ENCODE measurements at regions of chr19 and their contacts with region 1.

Region 1: DNA sequence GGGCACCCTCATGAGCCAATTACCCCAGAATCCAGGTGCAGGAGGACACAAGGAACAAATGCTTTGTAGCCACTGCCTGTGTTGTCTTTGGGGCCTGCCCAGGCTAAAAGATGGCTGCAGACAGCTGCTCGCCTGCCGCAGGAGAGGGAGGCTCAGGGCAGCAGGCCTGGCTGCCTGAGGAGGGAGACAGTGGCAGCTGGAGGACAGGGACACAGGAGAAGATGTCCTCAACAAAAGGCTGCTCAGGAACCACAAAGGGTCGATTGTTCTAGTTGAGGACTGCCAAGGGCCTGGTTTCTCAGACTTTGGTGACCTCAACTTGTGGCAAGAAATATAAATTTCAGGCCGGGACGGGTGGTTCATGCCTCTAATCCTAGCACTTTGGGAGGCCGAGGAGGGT is 7.6 kb downstream of the SIRT2 start:
- DNase-seq: no peak
- ATAC-seq: no peak
- H3K4me3 Mint-ChIP-seq: no peak overlapping the region
- H3K27ac Mint-ChIP-seq: no peak overlapping the region
- H3K4me1 Mint-ChIP-seq: no peaks in the 10 kb centered on the region
- H3K27me3 Mint-ChIP-seq: peaks cover 2% of the 10 kb centered on the region; the same call in 1 of the 2 replicates
- CTCF ChIP-seq: no peak

Region 2: DNA sequence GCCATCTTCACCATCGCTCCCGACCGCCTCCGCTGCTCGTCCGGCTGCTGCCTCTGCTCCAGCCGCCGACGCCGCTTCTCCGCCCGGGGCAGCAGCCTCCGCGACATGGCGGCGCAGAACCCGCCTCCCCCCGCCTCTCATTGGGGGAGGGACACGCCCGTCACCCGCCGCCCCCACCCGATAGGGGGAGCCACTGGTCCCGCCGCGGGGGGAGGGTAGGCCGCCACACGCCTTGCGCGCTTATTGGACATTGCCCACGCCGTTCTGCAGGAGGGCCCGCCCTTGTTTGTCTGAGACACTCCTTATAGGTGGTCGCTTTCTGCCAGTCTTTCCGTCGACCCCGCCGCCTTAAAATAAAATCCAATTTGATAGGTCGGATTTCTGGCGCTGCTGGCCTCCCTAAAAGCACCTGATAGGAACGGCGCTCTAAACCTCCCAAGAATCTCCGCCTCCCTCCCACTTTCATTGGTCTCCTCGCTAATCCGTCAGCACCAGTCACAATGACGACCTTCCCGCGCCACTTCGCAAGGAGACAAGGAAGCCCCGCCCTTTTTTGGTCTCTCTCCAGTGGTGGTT is 41.8 kb before region 1 on chr19 and contains the start of gene HNRNPL:
- CTCF ChIA-PET with region 1: interaction called, 18 read pairs
- POLR2A ChIA-PET with region 1: no interaction called
- DNase-seq: peak; percentile 99
- ATAC-seq: peak; percentile 73
- H3K4me3 Mint-ChIP-seq: peak within 1 kb of the TSS; percentile 92
- H3K27ac Mint-ChIP-seq: peak within 1 kb of the TSS; percentile 99
- H3K4me1 Mint-ChIP-seq: peaks cover 39% of the 10 kb centered on the region
- H3K27me3 Mint-ChIP-seq: peaks cover under 1% of the 10 kb centered on the region; the same call in 1 of the 2 replicates
- CTCF ChIP-seq: peak; percentile 34; the same call in 1 of the 2 replicates
- total RNA-seq, gene HNRNPL: 680 to 779 TPM (median 683 TPM) in 3 replicates

Region 3: GRCh38 chr19:38869856-38870607 is 21.7 kb before region 1 on chr19:
- CTCF ChIA-PET with region 1: interaction called, 43 read pairs
- POLR2A ChIA-PET with region 1: no interaction called
- DNase-seq: peak; percentile 89
- ATAC-seq: peak; percentile 78
- H3K4me3 Mint-ChIP-seq: peak overlapping the region; percentile 79
- H3K27ac Mint-ChIP-seq: no peak overlapping the region
- H3K4me1 Mint-ChIP-seq: peaks cover 7% of the 10 kb centered on the region
- H3K27me3 Mint-ChIP-seq: peaks cover 21% of the 10 kb centered on the region
- CTCF ChIP-seq: peak; percentile 50

Region 4: DNA sequence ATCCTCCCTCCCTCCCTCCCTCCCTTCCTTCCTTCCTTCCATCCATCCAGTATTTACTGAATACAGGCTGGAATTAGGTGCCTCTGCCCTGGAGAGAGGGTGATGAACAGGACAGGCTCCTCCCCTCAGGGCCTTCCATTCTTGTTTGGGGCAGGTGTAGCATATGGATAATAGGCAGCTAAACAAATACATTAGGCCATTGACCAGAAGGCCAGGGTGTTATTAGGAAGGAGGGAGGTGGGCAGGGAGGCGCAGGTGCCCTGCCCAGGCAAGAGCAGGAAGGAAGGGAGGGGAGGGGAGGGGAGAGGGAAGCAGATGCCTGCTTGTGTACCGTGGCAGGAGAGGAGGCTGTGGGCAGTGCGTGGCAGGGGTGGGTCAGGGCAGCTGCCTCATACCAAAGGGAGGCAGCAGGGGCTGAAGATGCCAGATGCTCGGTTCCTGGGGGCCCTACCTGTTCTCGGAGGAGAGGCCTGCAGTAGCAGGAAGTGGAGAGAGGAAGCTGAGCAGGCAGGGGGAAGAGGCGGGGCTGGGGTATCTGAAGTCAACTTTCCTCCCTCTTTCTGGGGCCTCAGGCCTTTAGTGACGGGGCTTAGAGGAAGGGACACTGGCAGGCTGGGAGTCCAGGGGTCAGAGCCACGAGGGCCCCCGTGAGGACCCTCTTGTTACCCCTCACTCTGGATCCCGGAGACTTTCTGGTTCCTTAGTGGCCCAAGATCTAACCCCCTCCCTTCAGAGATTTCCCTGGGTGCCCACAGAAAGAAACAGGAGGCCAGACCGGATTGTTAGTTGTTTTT is 13.8 kb before region 1 on chr19 and contains the start of gene RINL:
- CTCF ChIA-PET with region 1: interaction called, 43 read pairs
- POLR2A ChIA-PET with region 1: interaction called, 3 read pairs
- DNase-seq: no peak
- ATAC-seq: peak; percentile 45
- H3K4me3 Mint-ChIP-seq: peak within 1 kb of the TSS; percentile 39; the same call in 1 of the 2 replicates
- H3K27ac Mint-ChIP-seq: peak within 1 kb of the TSS; percentile 83; the same call in 1 of the 2 replicates
- H3K4me1 Mint-ChIP-seq: peaks cover 26% of the 10 kb centered on the region
- H3K27me3 Mint-ChIP-seq: no peaks in the 10 kb centered on the region; the same call in 1 of the 2 replicates
- CTCF ChIP-seq: no peak
- total RNA-seq, gene RINL: 12.6 to 14.6 TPM (median 14.5 TPM) in 3 replicates

Region 5: DNA sequence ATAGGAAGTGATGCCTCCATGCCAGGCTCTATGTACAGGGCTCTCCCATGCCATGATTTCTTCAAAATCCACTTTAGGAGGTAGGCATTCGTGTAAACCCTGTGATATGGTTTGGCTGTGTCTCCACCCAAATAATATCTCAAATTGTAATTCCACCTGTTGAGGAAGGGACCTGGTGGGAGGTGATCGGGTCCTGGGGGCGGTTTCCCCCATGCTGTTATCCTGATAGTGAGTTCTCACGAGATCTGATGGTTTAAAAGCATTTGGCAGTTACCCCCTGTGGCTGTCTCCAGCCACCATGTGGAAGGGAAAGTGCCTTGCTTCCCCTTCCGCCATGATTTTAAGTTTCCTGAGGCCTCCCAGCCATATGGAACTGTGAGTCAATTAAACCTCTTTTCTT is 30.7 kb after region 1 on chr19:
- CTCF ChIA-PET with region 1: no interaction called
- POLR2A ChIA-PET with region 1: no interaction called
- DNase-seq: no peak
- ATAC-seq: no peak
- H3K4me3 Mint-ChIP-seq: no peak overlapping the region
- H3K27ac Mint-ChIP-seq: no peak overlapping the region
- H3K4me1 Mint-ChIP-seq: no peaks in the 10 kb centered on the region
- H3K27me3 Mint-ChIP-seq: no peaks in the 10 kb centered on the region
- CTCF ChIP-seq: no peak